ENCODE measurements at regions of chr2 and their contacts with region 1.

Region 1: GRCh38 chr2:192162392-192163042 is 32.2 kb downstream of the TMEFF2 start:
- DNase-seq: peak; percentile 41
- H3K27ac ChIP-seq: no peak overlapping the region
- CTCF ChIP-seq: peak; percentile 89

Region 2: DNA sequence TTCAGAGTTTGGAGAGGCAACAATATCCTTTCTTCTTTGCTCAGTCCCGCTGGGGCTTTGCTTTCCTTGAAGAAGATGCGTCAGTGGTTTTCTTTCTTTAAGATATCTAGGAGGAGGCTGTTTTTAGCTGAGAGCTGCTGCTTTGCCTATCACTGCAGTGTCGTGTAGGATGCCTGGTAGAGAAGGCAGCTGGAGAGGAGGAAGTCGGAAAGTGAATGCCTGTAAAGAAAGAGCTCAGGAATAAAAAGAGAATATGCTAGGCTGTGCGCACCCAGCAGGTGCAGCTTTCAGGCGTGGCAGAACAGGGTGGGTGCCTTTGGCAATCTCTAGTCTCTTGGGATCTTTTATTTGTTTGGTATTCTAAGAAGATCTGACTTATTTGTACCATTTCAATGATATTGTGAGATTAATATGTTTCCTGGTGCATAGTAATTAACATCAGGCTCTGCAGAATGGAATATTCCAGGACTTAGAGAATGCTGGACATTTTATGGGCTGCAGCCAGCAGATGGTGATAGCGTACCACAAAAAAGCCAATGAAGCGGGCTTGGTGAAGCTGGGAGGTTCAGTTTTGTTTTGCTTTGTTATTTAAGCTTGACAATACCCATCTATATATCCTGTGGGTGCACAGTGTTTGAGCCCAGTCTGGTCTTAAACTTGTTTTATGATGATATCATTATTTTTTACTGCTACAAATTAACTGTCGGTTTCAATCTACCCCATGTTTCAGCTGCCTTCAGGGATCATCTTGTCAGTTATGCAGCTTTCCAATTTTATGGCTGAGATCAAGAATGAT is 350.5 kb before region 1 on chr2:
- CTCF ChIA-PET with region 1: interaction called, 72 read pairs
- POLR2A ChIA-PET with region 1: no interaction called
- DNase-seq: peak; percentile 60
- H3K27ac ChIP-seq: no peak overlapping the region
- CTCF ChIP-seq: peak; percentile 85

Region 3: DNA sequence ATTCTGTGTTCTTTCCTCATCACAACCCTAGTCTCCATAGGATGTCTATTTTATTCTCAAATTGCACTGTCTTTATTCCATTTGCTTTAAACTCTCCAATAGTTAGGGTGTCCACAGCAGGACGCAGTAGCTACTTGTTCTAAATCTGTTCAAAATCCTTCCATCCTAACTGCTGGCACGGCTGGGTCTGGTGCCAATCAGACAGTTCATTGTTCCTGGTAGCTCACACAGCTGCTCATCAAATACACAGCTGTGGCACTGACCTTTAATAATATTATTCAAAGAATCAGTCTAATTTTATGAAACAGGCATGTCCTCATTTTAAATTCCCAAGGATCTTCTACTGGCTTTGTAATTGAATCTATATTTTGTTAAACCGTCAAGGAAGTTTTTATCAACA is 91.9 kb after region 1 on chr2:
- CTCF ChIA-PET with region 1: no interaction called
- POLR2A ChIA-PET with region 1: no interaction called
- DNase-seq: no peak
- H3K27ac ChIP-seq: no peak overlapping the region
- CTCF ChIP-seq: no peak